ENCODE measurements at regions of chr2 and their contacts with region 1.

Region 1: DNA sequence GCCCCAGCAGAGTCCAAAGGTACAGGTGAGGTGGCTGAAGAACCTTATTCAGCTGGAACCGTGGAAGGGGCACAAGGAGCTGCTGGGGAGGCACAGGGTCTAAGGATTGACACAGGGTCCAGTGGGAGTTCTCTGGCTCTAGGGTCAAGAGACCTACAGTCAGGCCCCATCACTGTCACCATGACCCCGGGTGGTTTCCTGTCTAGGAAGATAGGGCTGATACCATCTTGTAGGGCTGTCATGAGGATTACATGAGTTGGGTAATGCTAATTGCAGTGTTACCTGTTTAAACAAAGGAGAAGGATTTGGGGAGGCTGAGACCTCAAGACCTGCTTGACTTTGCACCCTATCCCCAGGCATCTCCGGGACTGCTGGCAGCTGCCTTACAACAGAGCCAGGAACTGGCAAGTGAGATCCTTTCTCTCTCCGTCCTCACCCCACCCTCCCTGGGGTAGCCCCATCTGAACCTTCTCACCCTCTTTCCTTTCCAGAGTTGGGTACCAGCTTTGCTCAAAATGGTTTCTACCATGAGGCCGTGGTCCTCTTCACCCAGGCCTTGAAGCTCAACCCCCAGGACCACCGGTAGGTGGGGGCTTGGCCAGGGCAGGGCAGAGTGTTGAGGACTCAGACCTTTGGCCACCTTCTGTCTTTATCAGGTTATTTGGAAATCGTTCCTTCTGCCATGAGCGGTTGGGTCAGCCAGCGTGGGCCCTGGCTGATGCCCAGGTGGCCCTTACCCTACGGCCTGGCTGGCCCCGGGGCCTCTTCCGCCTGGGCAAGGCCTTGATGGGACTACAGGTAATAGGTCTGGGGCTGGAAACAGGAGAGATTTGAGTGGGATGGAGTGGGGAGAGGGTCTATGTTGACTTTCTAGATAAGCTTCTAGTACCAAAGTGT is 7.5 kb downstream of the LBX2 start:
- DNase-seq: no peak
- H3K4me3 Mint-ChIP-seq: no peak overlapping the region
- H3K27ac Mint-ChIP-seq: no peak overlapping the region
- H3K4me1 Mint-ChIP-seq: peaks cover 4% of the 10 kb centered on the region
- H3K27me3 Mint-ChIP-seq: no peaks in the 10 kb centered on the region

Region 2: DNA sequence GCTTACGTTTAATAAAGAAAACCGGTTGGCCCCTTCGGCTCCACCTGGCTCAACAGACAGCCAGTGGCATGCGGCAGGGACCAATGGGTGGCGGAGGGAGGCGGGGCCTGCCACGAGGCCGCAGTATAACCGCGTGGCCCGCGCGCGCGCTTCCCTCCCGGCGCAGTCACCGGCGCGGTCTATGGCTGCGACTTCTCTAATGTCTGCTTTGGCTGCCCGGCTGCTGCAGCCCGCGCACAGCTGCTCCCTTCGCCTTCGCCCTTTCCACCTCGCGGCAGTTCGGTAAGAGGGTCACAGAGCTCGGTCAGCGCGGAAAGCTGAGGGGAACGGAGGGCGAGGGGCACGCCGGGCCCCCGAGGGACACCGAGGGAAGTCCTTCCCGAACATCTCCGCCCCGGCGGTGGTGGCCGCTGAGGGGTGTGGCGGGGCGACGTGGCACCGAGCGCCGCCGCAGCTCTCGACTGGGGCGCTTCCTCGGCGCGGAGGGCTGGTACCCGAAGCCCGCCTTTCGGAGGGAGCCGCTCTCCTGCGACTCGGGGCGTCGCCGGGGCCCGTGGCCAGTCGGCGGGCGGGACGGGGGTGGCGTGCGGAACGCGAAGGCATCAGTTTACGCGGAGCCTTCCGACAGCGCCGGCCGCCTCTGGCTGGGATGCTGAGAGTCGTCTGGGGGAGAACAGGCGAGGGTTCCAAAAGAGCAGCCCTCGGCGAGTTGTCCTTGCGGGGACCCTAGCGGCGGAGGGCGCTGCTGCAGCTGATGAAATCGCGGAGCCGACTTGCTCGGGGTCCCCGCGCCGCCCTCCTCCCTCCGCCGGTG is 293.2 kb before region 1 on chr2 and contains the start of gene MTHFD2:
- CTCF ChIA-PET with region 1: no interaction called
- POLR2A ChIA-PET with region 1: no interaction called
- DNase-seq: peak; percentile 92
- H3K4me3 Mint-ChIP-seq: peak within 1 kb of the TSS; percentile 92
- H3K27ac Mint-ChIP-seq: peak within 1 kb of the TSS; percentile 98
- H3K4me1 Mint-ChIP-seq: peaks cover 55% of the 10 kb centered on the region
- H3K27me3 Mint-ChIP-seq: no peaks in the 10 kb centered on the region
- total RNA-seq, gene MTHFD2: 129 to 130 TPM

Region 3: GRCh38 chr2:74502720-74503505 is 11.0 kb after region 1 on chr2:
- CTCF ChIA-PET with region 1: interaction called, 16 read pairs
- POLR2A ChIA-PET with region 1: no interaction called
- DNase-seq: peak; percentile 38
- H3K4me3 Mint-ChIP-seq: peak overlapping the region; percentile 54
- H3K27ac Mint-ChIP-seq: no peak overlapping the region
- H3K4me1 Mint-ChIP-seq: peaks cover 67% of the 10 kb centered on the region
- H3K27me3 Mint-ChIP-seq: peaks cover 58% of the 10 kb centered on the region

Measured in activated CD4-positive, alpha-beta T cell treated with anti-CD3 and anti-CD28 coated beads, Interleukin-2, amount 10 ng/mL, durations not matched to agents 7 days and 5 days (primary cell).